ENCODE measurements at regions of chr15 and their contacts with region 1.

Region 1: DNA sequence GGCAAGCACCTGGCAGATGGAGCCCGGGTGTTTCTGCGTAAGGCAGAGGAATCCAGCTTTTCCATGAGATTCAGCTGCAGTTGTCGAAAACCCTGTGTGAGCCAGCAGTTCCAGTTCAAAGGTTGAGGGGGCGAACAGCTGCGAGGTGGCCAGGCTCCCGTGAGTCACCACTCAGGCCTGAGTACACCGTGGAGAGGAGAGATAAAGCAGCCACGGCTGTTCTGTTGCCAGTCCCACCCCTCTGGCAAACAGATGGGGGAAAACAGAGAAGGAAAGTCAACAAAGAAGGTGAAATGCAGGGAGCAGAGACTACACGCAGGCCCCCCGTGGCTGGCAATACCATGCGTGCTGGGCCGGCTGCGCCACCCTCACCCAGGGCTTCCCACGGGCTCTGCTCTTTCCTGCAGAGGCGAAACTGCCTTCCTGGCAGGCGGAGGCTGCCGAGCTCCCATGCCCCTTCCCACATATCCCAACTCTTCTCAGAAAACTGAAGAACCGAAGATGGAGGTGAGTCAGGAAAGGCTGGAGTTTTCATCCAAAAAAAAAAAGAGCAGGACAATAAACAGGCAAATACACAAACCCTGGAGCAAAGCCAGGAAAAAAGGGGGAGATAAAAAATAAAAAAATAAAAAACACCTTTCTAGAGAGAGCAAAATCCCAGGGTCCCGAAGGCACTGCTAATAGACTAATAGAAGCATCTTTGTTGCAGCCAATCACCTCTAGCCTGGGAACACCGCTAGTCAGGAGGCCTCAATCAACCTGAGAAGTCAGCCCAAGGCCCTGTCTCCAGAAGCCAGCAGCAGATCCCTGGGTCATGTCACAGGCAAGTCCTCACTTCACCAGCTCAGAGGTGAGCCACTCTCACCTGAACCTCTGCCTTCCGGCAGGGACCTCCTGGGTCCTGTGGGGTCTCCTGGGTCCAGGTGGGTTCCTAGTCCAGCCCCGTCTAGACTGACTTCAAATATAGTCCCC is 37.7 kb downstream of the FAM174B start:
- DNase-seq: peak; percentile 76 to 82
- ATAC-seq: peak; percentile 82 to 90 (median 86)
- H3K4me3 ChIP-seq: no peak overlapping the region
- H3K27ac ChIP-seq: peak overlapping the region; percentile 70
- H3K4me1 ChIP-seq: peaks cover 27% of the 10 kb centered on the region
- H3K27me3 ChIP-seq: no peaks in the 10 kb centered on the region
- CTCF ChIP-seq: no peak

Region 2: GRCh38 chr15:92527197-92527596 is 90.6 kb before region 1 on chr15:
- intact Hi-C with region 1: loop called in 1 of 2 experiments (anchors 5 kb)
- DNase-seq: no peak
- ATAC-seq: peak; percentile 65 to 85 (median 80)
- H3K4me3 ChIP-seq: no peak overlapping the region
- H3K27ac ChIP-seq: no peak overlapping the region
- H3K4me1 ChIP-seq: peaks cover 20% of the 10 kb centered on the region
- H3K27me3 ChIP-seq: peaks cover 0 to 2% (median 0%) of the 10 kb centered on the region in 3 donors
- CTCF ChIP-seq: no peak

Region 3: DNA sequence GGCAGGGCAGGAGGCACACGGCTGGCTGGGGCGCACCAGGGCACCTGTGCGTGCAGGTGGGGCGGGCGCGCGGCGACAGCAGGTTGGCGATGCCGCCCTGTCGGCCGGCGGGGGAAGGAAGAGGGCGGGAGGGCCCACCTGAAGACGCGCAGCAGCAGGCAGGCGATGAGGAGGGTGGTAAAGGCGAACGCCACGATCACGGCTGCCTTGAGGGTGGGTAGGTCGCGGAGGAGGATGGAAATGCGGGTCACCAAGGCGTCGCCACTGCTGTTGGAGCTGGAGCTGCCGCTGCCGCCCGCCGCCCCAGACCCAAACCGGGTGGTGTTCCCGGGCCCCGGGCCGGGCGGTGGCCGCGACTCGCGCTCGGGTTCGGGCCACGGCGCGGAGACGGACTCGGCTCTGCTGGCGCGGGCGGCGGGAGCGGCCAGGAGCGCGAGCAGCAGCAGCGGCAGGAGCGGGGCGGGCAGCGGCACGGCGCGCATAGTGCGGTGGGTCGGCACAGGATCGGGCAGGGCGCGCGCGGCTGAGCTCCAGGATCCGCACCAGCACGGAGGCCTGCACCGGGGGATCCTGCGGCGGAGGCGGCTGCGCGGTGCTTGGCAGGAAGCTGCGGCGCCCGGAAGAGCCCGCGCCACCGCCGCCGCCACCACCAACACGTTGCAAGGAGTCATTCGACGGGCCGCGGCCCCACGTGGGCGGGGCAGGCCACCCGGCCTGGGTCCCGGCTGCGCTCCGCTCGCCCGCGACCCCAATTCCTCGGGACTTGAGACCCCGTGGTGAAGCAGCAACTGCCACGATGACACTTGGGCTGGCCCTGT is 37.6 kb after region 1 on chr15 and contains the start of gene FAM174B:
- intact Hi-C with region 1: no loop called
- DNase-seq: peak; percentile 57 to 71
- ATAC-seq: peak; percentile 87 to 95 (median 88)
- H3K4me3 ChIP-seq: peak within 1 kb of the TSS; percentile 73
- H3K27ac ChIP-seq: peak within 1 kb of the TSS; percentile 60
- H3K4me1 ChIP-seq: no peaks in the 10 kb centered on the region
- H3K27me3 ChIP-seq: peaks cover 0 to 6% (median 0%) of the 10 kb centered on the region in 3 donors
- CTCF ChIP-seq: no peak
- total RNA-seq, gene FAM174B: 9.5 to 22.1 (median 12.2) TPM

Region 4: GRCh38 chr15:92949604-92950249 is 331.9 kb after region 1 on chr15:
- intact Hi-C with region 1: no loop called
- DNase-seq: no peak
- ATAC-seq: no peak
- H3K4me3 ChIP-seq: no peak overlapping the region
- H3K27ac ChIP-seq: peak overlapping the region; percentile 47
- H3K4me1 ChIP-seq: peaks cover 12% of the 10 kb centered on the region
- H3K27me3 ChIP-seq: no peaks in the 10 kb centered on the region
- CTCF ChIP-seq: no peak

Measured in psoas muscle (tissue), 8 donors.